Heart left ventricle (tissue), 16 donors: ENCODE measurements at regions of chr3 and their contacts with region 1.

Region 1: DNA sequence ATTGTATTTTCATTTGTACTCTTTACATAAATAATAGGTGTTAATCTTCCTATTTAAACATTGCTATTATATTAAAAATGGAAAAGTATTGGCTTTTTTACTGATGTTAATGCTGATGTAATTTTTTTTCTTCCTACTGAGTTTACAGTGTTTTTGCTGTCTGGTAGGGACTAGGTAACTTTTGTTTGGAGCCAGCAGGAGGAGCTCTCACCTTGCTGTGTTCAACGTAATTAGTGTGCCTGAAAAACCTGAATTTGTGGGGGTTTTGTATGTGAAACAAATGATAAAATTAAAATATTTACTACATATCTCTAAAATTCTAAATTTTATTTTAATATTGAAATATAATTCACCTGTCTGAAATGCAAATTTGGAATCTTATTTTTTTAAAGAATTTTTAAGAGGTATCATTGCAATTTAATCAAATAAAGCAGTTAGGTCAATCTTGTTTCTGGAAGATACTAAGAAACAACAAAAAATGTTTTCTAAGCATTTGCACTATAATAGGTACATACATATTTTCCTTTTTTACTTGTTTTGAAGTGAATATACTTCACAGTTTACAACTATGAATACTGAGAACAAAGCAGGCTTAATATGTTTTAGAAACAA is 48.8 kb downstream of the EPHA6 start:
- DNase-seq: no peak
- ATAC-seq: no peak
- H3K4me3 ChIP-seq: no peak overlapping the region
- H3K27ac ChIP-seq: no peak overlapping the region
- H3K4me1 ChIP-seq: no peaks in the 10 kb centered on the region
- H3K27me3 ChIP-seq: no peaks in the 10 kb centered on the region
- CTCF ChIP-seq: peak in 10 of 12 donors; percentile 23 to 60 (median 40)
- POLR2A ChIP-seq: no peak

Region 2: DNA sequence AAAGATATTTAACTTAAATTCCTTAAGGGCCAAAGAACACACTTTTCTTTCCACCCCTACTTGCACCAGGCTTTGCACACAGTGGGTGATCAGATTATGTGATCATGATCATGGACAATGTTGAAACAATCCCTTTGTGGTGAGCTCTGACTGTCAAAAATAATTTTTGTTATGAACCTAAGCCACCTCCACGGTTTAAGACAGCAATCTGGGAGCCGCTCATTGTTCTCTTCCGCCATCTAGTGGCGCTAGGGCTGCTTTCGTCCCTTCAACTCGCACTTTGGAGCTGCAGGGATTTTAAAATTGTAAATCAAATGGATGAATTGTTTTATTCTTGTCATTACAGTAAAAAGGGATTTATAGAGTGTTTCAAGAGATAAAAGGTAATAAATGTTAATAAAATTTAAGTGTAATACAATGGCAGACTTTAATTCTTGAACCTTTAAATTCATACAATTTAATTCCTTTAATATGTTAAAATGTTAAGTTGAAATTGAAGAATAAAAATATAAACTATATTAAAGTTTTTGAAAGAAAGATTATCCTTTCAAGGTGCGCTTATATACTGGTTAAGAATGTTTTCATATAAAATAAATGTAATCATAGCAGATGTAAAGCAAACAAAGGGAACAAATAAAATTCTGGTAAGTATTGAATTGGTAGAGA is 856.1 kb after region 1 on chr3:
- intact Hi-C with region 1: loop called in 7 of 10 experiments (anchors 2 to 10 kb)
- DNase-seq: peak; percentile 34 to 62 (median 54)
- ATAC-seq: peak in 3 of 4 donors; percentile 64 to 82 (median 77)
- H3K4me3 ChIP-seq: no peak overlapping the region
- H3K27ac ChIP-seq: no peak overlapping the region
- H3K4me1 ChIP-seq: no peaks in the 10 kb centered on the region
- H3K27me3 ChIP-seq: no peaks in the 10 kb centered on the region
- CTCF ChIP-seq: peak; percentile 74 to 95 (median 85)
- POLR2A ChIP-seq: no peak